MCF 10A (cell line): ENCODE measurements at regions of chr15 and their contacts with region 1.

Region 1: DNA sequence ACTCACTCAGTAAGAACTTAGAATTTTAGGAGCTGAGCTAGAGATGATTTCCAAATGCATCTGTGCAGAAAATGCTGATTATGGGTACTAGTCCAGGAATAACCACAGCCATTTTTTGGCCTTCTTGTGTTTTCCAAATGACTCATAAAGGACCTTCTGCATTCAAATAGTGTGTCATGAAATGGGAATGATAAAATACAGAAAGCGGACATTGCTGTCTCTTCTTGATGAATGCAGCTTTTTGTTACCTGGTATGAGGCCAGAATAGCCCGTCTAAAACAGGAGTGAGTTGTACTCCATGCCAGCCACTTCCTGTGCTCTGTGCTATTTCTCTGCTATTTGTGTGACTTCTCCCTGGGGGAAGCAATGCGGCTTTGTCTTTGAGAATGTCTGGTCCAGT is 20.5 kb upstream of the FRMD5 start:
- DNase-seq: peak; percentile 72
- H3K4me3 Mint-ChIP-seq: no peak overlapping the region
- H3K27ac Mint-ChIP-seq: no peak overlapping the region
- H3K4me1 Mint-ChIP-seq: peaks cover 11% of the 10 kb centered on the region
- H3K27me3 Mint-ChIP-seq: no peaks in the 10 kb centered on the region
- CTCF ChIP-seq: no peak

Region 2: GRCh38 chr15:43903864-43904290 is 311.7 kb before region 1 on chr15:
- CTCF ChIA-PET with region 1: interaction called, 43 read pairs
- POLR2A ChIA-PET with region 1: no interaction called
- intact Hi-C with region 1: loop called (anchors 1 kb)
- DNase-seq: peak; percentile 77
- H3K4me3 Mint-ChIP-seq: peak overlapping the region; percentile 4
- H3K27ac Mint-ChIP-seq: no peak overlapping the region
- H3K4me1 Mint-ChIP-seq: peaks cover 5% of the 10 kb centered on the region
- H3K27me3 Mint-ChIP-seq: no peaks in the 10 kb centered on the region
- CTCF ChIP-seq: peak; percentile 88

Region 3: GRCh38 chr15:44066316-44066740 is 149.3 kb before region 1 on chr15:
- CTCF ChIA-PET with region 1: interaction called, 7 read pairs
- POLR2A ChIA-PET with region 1: no interaction called
- intact Hi-C with region 1: loop called (anchors 5 kb)
- DNase-seq: peak; percentile 93
- H3K4me3 Mint-ChIP-seq: no peak overlapping the region
- H3K27ac Mint-ChIP-seq: no peak overlapping the region
- H3K4me1 Mint-ChIP-seq: peaks cover 6% of the 10 kb centered on the region
- H3K27me3 Mint-ChIP-seq: no peaks in the 10 kb centered on the region
- CTCF ChIP-seq: peak; percentile 65

Region 4: DNA sequence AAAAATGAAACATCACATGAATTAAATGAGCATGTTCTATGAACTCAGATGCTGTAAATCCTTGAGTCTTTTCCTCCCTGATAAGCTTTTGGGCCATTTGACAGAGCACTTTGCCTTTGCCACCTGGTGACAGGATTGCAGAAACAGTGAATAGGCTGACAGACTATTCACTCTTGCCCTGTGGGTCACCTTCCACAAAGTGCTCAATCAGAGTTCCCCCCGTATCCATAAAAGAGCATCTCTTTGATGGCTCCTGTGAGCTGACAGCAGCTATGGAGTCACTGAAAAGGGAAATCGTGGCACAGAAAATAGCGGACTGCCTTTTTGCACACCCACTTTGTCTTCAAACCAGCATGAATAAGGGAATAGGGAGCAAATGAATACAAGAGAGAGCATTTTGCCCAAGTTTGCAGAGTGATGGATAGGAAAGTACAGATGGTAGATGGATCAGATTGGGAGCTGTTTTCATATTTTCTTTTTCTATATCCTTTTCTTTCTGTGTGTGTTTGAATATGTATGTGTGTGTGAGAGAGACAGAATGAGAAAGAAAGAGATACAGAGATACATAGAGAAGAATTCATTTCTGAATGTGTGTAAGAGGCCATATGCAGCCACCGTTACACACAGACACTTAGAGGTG is 35.1 kb after region 1 on chr15:
- CTCF ChIA-PET with region 1: no interaction called
- POLR2A ChIA-PET with region 1: no interaction called
- intact Hi-C with region 1: no loop called
- DNase-seq: no peak
- H3K4me3 Mint-ChIP-seq: no peak overlapping the region
- H3K27ac Mint-ChIP-seq: no peak overlapping the region
- H3K4me1 Mint-ChIP-seq: no peaks in the 10 kb centered on the region
- H3K27me3 Mint-ChIP-seq: no peaks in the 10 kb centered on the region
- CTCF ChIP-seq: no peak

Region 5: DNA sequence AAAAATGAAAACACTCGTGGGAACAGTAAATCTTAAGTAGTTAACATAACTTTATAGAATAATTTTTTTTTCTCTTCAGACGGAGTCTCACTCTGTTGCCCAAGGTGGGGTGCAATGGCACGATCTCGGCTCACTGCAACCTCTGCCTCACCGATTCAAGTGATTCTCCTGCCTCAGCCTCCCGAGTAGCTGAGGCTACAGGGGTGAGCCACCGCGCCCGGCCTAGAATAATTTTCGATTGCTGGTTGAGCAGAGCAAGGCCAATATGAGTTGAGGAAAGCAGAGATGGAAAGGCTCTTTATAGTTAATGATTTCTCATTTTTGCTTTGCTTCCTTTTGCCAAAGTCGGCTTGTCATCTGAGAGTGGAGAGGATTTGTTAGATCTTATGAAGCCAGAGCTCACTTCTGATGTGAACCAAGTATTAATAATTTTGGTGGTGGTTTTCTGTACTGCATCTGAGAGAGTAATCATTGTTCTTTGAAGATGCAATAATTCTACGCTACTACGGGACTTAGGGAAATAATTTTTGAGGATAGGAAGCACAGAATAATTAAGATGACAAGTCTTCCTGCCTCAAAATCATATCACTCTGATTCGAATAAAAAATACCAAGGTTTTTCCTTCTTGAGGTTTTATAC is 71.3 kb after region 1 on chr15:
- CTCF ChIA-PET with region 1: no interaction called
- POLR2A ChIA-PET with region 1: interaction called, 3 read pairs
- intact Hi-C with region 1: loop called (anchors 5 kb)
- DNase-seq: no peak
- H3K4me3 Mint-ChIP-seq: peak overlapping the region; percentile 95
- H3K27ac Mint-ChIP-seq: peak overlapping the region; percentile 97
- H3K4me1 Mint-ChIP-seq: peaks cover 15% of the 10 kb centered on the region
- H3K27me3 Mint-ChIP-seq: no peaks in the 10 kb centered on the region
- CTCF ChIP-seq: no peak

Region 6: GRCh38 chr15:44381236-44381635 is 165.6 kb after region 1 on chr15:
- CTCF ChIA-PET with region 1: no interaction called
- POLR2A ChIA-PET with region 1: no interaction called
- intact Hi-C with region 1: no loop called
- DNase-seq: no peak
- H3K4me3 Mint-ChIP-seq: no peak overlapping the region
- H3K27ac Mint-ChIP-seq: no peak overlapping the region
- H3K4me1 Mint-ChIP-seq: no peaks in the 10 kb centered on the region
- H3K27me3 Mint-ChIP-seq: no peaks in the 10 kb centered on the region
- CTCF ChIP-seq: no peak

Region 7: GRCh38 chr15:44570361-44570760 is 354.8 kb after region 1 on chr15:
- CTCF ChIA-PET with region 1: no interaction called
- POLR2A ChIA-PET with region 1: no interaction called
- intact Hi-C with region 1: no loop called
- DNase-seq: no peak
- H3K4me3 Mint-ChIP-seq: no peak overlapping the region
- H3K27ac Mint-ChIP-seq: no peak overlapping the region
- H3K4me1 Mint-ChIP-seq: no peaks in the 10 kb centered on the region
- H3K27me3 Mint-ChIP-seq: no peaks in the 10 kb centered on the region
- CTCF ChIP-seq: no peak